ENCODE measurements at regions of chr10 and their contacts with region 1.

Region 1: GRCh38 chr10:3911713-3912442 is 126.9 kb upstream of the KLF6 start:
- DNase-seq: no peak
- H3K4me3 ChIP-seq: no peak overlapping the region
- H3K27ac ChIP-seq: peak overlapping the region in 3 of 4 donors; percentile 29 to 66 (median 32)
- H3K4me1 ChIP-seq: peaks cover 0 to 5% (median 2%) of the 10 kb centered on the region in 4 donors
- H3K27me3 ChIP-seq: no peaks in the 10 kb centered on the region
- CTCF ChIP-seq: no peak
- EP300 ChIP-seq: no peak
- POLR2A ChIP-seq: no peak

Region 2: GRCh38 chr10:4051011-4051640 is 139.2 kb after region 1 on chr10:
- in situ Hi-C with region 1: no loop called
- intact Hi-C with region 1: loop called (anchors 10 kb)
- DNase-seq: no peak
- H3K4me3 ChIP-seq: peak overlapping the region in 2 of 4 donors; percentile 2 to 19
- H3K27ac ChIP-seq: peak overlapping the region; percentile 27 to 78 (median 68)
- H3K4me1 ChIP-seq: peaks cover 3 to 19% (median 9%) of the 10 kb centered on the region in 4 donors
- H3K27me3 ChIP-seq: no peaks in the 10 kb centered on the region
- CTCF ChIP-seq: no peak
- EP300 ChIP-seq: no peak
- POLR2A ChIP-seq: no peak

Measured in transverse colon (tissue), 4 donors.